ENCODE measurements at regions of chr17 and their contacts with region 1.

Region 1: DNA sequence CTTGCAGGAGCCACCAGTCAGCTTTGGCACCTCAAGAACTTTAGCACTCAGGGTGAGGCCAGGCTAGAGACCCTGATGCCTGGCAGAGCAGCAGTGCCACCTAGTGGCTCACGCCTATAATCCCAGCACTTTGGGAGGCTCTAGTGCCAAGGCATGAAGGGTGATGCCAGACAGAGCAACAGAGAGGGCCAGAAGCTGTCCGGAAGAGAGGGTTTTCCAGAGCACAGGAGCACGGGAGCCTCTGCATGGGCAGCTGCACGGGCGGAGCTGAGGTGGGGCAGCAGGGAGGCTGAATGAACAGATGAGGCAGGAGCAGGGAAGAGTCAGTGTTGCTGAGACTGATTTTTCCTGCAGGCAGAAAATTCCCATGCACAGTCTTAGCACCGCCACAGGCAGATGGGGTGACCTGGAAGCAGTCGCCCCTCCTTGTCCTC is 38.9 kb downstream of the MYH3 start:
- DNase-seq: peak; percentile 72
- ATAC-seq: peak; percentile 81
- H3K4me3 ChIP-seq: no peak overlapping the region
- H3K4me3 Mint-ChIP-seq: no peak overlapping the region
- H3K27ac ChIP-seq: no peak overlapping the region
- H3K27ac Mint-ChIP-seq: no peak overlapping the region
- H3K4me1 ChIP-seq: peaks cover 4 to 14% of the 10 kb centered on the region in 2 donors
- H3K4me1 Mint-ChIP-seq: peaks cover 6% of the 10 kb centered on the region
- H3K27me3 ChIP-seq: peaks cover 0 to 4% (median 0%) of the 10 kb centered on the region in 4 experiments
- H3K27me3 Mint-ChIP-seq: peaks cover 3% of the 10 kb centered on the region
- CTCF ChIP-seq: peak; percentile 85

Region 2: GRCh38 chr17:9918804-9919352 is 699.3 kb before region 1 on chr17:
- CTCF ChIA-PET with region 1: interaction called, 137 read pairs
- POLR2A ChIA-PET with region 1: no interaction called
- intact Hi-C with region 1: loop called (anchors 1 kb)
- DNase-seq: no peak
- ATAC-seq: no peak
- H3K4me3 ChIP-seq: no peak overlapping the region
- H3K4me3 Mint-ChIP-seq: no peak overlapping the region
- H3K27ac ChIP-seq: no peak overlapping the region
- H3K27ac Mint-ChIP-seq: no peak overlapping the region
- H3K4me1 ChIP-seq: no peaks in the 10 kb centered on the region
- H3K4me1 Mint-ChIP-seq: no peaks in the 10 kb centered on the region
- H3K27me3 ChIP-seq: no peaks in the 10 kb centered on the region
- H3K27me3 Mint-ChIP-seq: no peaks in the 10 kb centered on the region
- CTCF ChIP-seq: no peak

Region 3: DNA sequence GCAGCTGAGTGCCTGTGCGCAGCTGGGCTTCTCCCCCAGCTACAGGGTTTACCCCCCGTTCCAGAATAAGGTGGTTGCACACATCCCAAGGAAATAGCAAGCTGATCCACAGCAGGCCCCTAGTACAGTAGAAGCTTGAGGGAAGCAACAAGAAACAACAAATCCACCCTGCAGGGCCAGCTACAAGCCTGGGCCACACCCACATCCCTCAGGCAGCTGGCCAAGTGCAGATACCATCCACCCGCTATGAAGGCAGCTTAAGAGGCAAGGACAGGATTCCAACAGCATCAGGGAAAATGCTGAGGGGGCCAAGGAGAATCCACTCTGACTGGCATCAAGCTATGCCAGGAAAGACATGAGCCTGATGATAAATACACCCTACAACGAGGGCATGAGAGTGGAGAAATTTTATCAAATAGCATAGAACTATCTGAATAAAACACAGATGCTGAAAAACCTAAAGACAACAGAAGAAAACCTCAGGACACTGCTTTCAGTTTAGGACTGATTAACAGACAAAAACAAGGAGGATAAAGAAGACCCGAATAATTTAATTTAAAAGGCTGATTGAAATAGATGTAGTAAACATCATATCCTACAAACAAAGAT is 646.1 kb before region 1 on chr17:
- CTCF ChIA-PET with region 1: interaction called, 14 read pairs
- POLR2A ChIA-PET with region 1: no interaction called
- intact Hi-C with region 1: no loop called
- DNase-seq: no peak
- ATAC-seq: no peak
- H3K4me3 ChIP-seq: no peak overlapping the region
- H3K4me3 Mint-ChIP-seq: no peak overlapping the region
- H3K27ac ChIP-seq: no peak overlapping the region
- H3K27ac Mint-ChIP-seq: no peak overlapping the region
- H3K4me1 ChIP-seq: no peaks in the 10 kb centered on the region
- H3K4me1 Mint-ChIP-seq: no peaks in the 10 kb centered on the region
- H3K27me3 ChIP-seq: no peaks in the 10 kb centered on the region
- H3K27me3 Mint-ChIP-seq: no peaks in the 10 kb centered on the region
- CTCF ChIP-seq: no peak

Region 4: GRCh38 chr17:10600571-10600970 is 17.6 kb before region 1 on chr17:
- CTCF ChIA-PET with region 1: interaction called, 39 read pairs
- POLR2A ChIA-PET with region 1: no interaction called
- intact Hi-C with region 1: no loop called
- DNase-seq: no peak
- ATAC-seq: no peak
- H3K4me3 ChIP-seq: no peak overlapping the region
- H3K4me3 Mint-ChIP-seq: no peak overlapping the region
- H3K27ac ChIP-seq: no peak overlapping the region
- H3K27ac Mint-ChIP-seq: no peak overlapping the region
- H3K4me1 ChIP-seq: no peaks in the 10 kb centered on the region
- H3K4me1 Mint-ChIP-seq: no peaks in the 10 kb centered on the region
- H3K27me3 ChIP-seq: peaks cover 0 to 4% (median 0%) of the 10 kb centered on the region in 4 experiments
- H3K27me3 Mint-ChIP-seq: peaks cover 11% of the 10 kb centered on the region
- CTCF ChIP-seq: no peak

Region 5: GRCh38 chr17:10646392-10646990 is 28.3 kb after region 1 on chr17:
- CTCF ChIA-PET with region 1: interaction called, 13 read pairs
- POLR2A ChIA-PET with region 1: no interaction called
- intact Hi-C with region 1: no loop called
- DNase-seq: peak; percentile 75
- ATAC-seq: peak; percentile 47
- H3K4me3 ChIP-seq: no peak overlapping the region
- H3K4me3 Mint-ChIP-seq: no peak overlapping the region
- H3K27ac ChIP-seq: no peak overlapping the region
- H3K27ac Mint-ChIP-seq: no peak overlapping the region
- H3K4me1 ChIP-seq: no peaks in the 10 kb centered on the region
- H3K4me1 Mint-ChIP-seq: peaks cover 2% of the 10 kb centered on the region
- H3K27me3 ChIP-seq: no peaks in the 10 kb centered on the region
- H3K27me3 Mint-ChIP-seq: no peaks in the 10 kb centered on the region
- CTCF ChIP-seq: peak; percentile 94

Measured in B cell (primary cell).